Thyroid gland (tissue), 4 donors: ENCODE measurements at regions of chr19 and their contacts with region 1.

Region 1: GRCh38 chr19:43747557-43748204 is 7.1 kb downstream of the SMG9 start:
- DNase-seq: no peak
- H3K4me3 ChIP-seq: no peak overlapping the region
- H3K27ac ChIP-seq: no peak overlapping the region
- H3K4me1 ChIP-seq: no peaks in the 10 kb centered on the region
- H3K27me3 ChIP-seq: no peaks in the 10 kb centered on the region
- CTCF ChIP-seq: no peak
- POLR2A ChIP-seq: no peak

Region 2: DNA sequence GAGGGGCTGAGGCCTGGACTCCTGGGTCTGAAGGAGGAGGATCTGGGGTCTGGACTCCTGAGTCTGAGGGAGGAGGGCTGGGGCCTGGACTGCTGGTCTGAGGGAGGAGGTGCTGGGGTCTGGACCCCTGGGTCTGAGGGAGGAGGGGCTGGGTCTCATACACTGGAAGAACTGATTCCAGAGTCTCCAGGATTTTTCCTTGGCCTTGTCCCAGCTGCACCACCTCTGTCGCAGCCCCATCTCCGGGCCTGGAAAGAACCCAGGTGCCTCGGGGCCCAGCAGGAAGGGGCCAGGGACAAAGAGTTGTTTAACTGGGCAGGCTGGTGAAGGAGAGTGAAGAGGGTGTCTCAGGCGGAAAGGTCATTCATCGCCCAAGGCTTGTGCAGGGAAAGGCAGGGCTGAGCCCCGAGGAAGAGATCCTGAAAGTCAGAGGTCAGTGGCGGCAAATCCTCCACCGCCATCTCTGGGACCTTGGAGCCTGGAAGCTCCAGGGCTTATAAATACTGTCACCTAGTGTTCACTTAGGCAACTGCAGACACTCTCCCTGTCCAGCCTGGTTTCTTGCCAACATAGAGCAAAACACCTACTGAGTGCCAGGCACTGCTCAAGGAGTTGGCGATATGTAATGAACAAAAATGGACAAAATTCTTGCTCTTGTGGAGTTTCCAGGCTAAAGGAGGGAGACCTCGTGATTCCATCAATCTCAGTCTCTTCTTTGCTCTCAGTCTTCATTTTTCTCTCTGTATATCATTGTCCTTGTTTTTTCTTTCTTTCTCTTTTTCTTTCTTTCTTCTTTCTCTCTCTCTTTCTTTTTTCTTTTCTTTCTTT is 37.5 kb after region 1 on chr19:
- intact Hi-C with region 1: loop called (anchors 5 kb)
- DNase-seq: peak; percentile 17 to 20
- H3K4me3 ChIP-seq: no peak overlapping the region
- H3K27ac ChIP-seq: no peak overlapping the region
- H3K4me1 ChIP-seq: no peaks in the 10 kb centered on the region
- H3K27me3 ChIP-seq: no peaks in the 10 kb centered on the region
- CTCF ChIP-seq: peak; percentile 81 to 94 (median 86)
- POLR2A ChIP-seq: no peak

Region 3: DNA sequence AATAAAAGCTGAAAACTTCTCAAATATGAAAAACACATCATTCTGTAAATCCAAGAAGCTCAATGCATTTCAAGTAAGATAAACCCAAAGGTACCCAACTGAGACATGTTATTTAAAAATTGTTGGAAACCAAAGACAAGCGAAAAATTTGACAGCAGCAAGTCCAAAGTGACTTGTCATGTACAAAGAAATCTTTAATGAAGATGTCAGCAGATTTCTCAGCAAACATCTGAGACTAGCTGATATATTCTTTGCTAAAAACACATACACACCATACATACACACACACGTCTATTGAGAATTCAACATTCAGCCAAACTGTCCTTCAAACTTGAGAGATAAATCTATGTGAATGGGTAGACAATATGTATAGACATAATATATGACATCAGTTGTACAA is 271.8 kb after region 1 on chr19:
- intact Hi-C with region 1: no loop called
- DNase-seq: no peak
- H3K4me3 ChIP-seq: no peak overlapping the region
- H3K27ac ChIP-seq: no peak overlapping the region
- H3K4me1 ChIP-seq: no peaks in the 10 kb centered on the region
- H3K27me3 ChIP-seq: no peaks in the 10 kb centered on the region
- CTCF ChIP-seq: no peak
- POLR2A ChIP-seq: no peak